ENCODE measurements at regions of chr19 and their contacts with region 1.

Region 1: DNA sequence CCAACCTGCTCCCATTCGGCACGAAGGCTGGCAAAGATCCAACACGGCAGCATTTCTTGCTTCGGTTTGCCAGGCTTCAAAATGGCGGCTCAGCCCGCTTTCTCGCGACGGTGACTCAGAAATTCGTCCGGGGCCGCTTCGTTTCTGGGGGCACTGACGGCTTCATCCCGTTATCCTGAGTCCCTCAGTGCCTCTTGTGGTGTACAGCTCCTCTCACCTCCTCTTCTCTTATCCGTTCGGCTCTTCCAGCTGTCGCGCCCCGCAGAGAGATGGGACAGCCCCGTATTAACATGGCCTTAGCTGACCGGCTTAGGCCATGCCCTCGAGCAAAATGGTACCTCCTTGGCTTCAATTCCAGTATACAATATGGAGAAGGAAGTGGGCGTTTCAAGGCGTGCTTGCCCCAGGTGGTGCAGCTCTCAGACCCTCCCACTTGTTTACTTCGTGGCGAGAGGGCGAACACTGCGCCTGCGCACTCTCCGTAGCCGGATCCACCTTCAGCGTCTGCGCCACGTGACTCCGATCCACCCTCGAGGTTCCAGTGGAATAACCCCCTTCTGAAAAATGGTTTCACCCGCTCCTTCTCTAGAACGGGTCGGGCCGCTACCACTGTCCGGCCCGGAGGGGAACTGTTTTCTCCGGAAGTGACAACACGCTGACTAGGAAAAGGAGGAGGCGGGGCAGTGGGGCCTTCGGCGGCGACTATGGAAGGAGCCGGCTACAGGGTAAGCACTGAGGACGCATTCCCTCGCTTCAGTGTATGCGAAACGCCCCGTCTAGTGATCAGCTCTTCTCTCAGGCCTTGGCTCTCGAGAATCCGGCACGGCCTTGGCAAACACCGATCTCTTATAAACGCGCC is at the starts of genes AKT1S1 and TBC1D17:
- DNase-seq: peak; percentile 91
- H3K4me3 ChIP-seq: peak within 1 kb of the TSS; percentile 98 to 99
- H3K27ac ChIP-seq: peak within 1 kb of the TSS; percentile 96 to 99
- H3K4me1 ChIP-seq: peaks cover 7 to 23% of the 10 kb centered on the region in 2 experiments; a peak in 3 of 4 replicates
- H3K27me3 ChIP-seq: no peaks in the 10 kb centered on the region
- CTCF ChIP-seq: no peak
- EP300 ChIP-seq: no peak
- RAD21 ChIP-seq: no peak
- polyA plus RNA-seq, gene AKT1S1: 56.7 and 63.7 TPM in 2 replicates
- polyA plus RNA-seq, gene TBC1D17: 27.3 and 28.3 TPM in 2 replicates

Region 2: DNA sequence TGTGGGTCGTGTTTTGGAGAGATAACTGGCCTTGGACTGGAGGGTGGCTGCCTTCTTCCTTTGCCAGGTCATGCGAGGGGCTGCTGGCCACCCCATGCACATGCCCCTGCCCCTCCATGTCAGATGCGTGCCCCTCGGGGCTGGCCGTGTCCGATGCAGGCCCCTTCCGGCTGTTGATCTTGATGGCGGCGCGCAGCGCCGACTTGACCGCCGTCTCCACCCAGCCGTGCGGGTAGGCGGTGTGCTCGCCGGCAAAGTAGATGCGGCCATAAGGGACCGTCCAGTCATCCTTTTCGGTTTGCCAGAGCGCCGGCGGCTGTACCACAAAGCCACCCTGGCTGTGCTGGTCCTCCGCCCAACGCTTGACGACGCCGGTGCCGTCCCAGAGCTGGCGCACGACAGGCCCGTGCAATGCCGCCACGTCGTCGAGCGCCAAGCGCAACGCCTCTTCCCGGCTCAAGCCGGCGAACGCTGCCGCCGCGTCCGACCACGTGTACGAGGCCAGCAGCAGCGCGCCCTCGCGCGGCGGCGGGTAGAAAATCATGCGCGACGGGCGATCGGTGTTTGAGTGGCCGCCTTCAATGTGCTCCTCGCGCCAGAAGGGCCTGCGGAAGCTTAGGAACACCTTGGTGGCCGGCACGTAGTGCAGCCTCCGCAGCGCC is 12.6 kb after region 1 on chr19:
- CTCF ChIA-PET with region 1: interaction called, 12 read pairs
- POLR2A ChIA-PET with region 1: interaction called, 9 read pairs
- DNase-seq: peak; percentile 82
- H3K4me3 ChIP-seq: peak overlapping the region; percentile 33 to 43; a peak in 2 of 4 replicates
- H3K27ac ChIP-seq: no peak overlapping the region; a peak in 1 of 4 replicates
- H3K4me1 ChIP-seq: peaks cover 0 to 13% of the 10 kb centered on the region in 2 experiments; a peak in 1 of 4 replicates
- H3K27me3 ChIP-seq: no peaks in the 10 kb centered on the region
- CTCF ChIP-seq: peak; percentile 61
- EP300 ChIP-seq: no peak
- RAD21 ChIP-seq: peak; percentile 26; the same call in 1 of the 2 replicates

Region 3: DNA sequence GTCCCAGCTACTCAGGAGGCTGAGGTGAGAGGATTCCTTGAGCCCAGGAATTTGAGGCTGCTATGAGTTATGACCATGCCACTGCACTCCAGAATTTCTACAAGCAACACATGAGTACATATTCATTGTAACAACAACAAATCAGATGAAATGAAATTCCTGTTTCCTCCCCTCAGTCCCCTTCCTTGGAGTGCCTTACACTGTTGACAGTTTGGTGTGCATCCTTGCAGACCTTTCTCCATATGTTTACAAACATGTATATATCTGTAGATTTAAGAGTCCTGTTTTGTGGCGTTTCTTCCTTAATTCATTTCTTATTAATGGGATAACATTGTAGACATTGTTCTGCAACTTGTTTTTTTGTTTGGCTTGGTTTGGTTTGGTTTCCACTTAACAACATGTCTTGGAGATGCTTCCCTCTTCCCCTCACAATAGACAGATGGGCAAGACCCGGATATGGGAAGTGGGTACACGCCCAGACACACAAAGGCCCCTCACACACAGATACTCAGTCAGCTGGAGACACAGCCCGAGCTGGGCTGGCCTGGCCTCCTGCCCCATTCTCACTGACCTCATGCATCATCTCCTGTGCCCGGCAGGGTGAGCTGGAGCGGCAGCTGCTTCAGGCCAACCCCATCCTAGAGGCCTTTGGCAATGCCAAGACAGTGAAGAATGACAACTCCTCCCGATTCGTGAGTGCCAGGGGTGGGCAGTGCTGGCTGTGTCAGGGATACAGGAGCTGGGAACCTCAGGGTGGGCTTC is 347.9 kb after region 1 on chr19:
- CTCF ChIA-PET with region 1: no interaction called
- POLR2A ChIA-PET with region 1: no interaction called
- DNase-seq: no peak
- H3K4me3 ChIP-seq: no peak overlapping the region
- H3K27ac ChIP-seq: no peak overlapping the region
- H3K4me1 ChIP-seq: no peaks in the 10 kb centered on the region
- H3K27me3 ChIP-seq: peaks cover 29% of the 10 kb centered on the region
- CTCF ChIP-seq: no peak
- EP300 ChIP-seq: no peak
- RAD21 ChIP-seq: no peak

Measured in SK-N-SH (cell line).